Activated T-helper 2 cell treated with anti-CD3 and anti-CD28 coated beads, Interferon-gamma antibody, Interleukin-2, Interleukin-4, amounts not matched to agents 10 μg/mL and 5 μg/mL and 100 μg/mL, durations not matched to agents 14 hours and 24 hours and 36 hours (primary cell): ENCODE measurements at regions of chr14 and their contacts with region 1.

Region 1: GRCh38 chr14:60561845-60562746 is 53.1 kb downstream of the SIX6 start:
- DNase-seq: no peak
- H3K4me3 Mint-ChIP-seq: no peak overlapping the region
- H3K27ac Mint-ChIP-seq: no peak overlapping the region
- H3K4me1 Mint-ChIP-seq: no peaks in the 10 kb centered on the region
- H3K27me3 Mint-ChIP-seq: peaks cover 12% of the 10 kb centered on the region

Region 2: GRCh38 chr14:60195179-60195810 is 366.8 kb before region 1 on chr14:
- intact Hi-C with region 1: loop called (anchors 5 kb)
- DNase-seq: no peak
- H3K4me3 Mint-ChIP-seq: no peak overlapping the region
- H3K27ac Mint-ChIP-seq: no peak overlapping the region
- H3K4me1 Mint-ChIP-seq: peaks cover 16% of the 10 kb centered on the region
- H3K27me3 Mint-ChIP-seq: peaks cover 5% of the 10 kb centered on the region

Region 3: DNA sequence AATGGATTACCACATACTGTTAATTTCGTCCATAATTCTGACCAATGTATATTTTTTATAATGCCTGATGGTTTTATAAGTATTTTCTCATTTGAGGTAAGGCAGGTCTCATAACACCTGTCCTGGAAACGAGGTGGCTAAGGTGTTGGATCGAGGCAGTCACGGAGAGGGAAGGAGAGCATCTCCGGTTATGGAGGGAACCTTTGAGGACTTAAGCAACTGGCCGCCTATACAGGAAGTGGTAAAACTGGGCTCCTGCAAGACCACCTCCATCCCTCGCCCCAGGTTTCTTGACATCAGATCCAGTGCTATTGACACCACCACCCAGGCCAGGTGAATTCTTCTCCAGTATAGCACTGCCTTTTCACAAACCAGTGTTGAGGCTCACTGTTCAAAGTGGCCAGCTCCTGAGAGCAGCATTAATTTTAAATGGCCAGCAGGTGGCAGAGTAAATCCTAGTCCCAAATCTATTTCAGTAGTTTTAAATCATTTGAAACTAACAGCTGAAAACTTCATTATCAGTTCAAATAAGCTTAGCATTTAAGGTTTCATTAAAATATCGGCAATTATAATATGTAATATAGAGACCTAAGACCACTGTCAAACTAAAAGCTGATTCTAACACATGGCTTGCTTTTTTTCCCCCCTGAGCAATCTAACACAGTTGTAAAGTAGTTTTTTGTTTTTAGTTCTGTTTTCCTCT is 212.3 kb before region 1 on chr14:
- intact Hi-C with region 1: loop called (anchors 2 kb)
- DNase-seq: no peak
- H3K4me3 Mint-ChIP-seq: no peak overlapping the region
- H3K27ac Mint-ChIP-seq: no peak overlapping the region
- H3K4me1 Mint-ChIP-seq: no peaks in the 10 kb centered on the region
- H3K27me3 Mint-ChIP-seq: peaks cover 23% of the 10 kb centered on the region

Region 4: DNA sequence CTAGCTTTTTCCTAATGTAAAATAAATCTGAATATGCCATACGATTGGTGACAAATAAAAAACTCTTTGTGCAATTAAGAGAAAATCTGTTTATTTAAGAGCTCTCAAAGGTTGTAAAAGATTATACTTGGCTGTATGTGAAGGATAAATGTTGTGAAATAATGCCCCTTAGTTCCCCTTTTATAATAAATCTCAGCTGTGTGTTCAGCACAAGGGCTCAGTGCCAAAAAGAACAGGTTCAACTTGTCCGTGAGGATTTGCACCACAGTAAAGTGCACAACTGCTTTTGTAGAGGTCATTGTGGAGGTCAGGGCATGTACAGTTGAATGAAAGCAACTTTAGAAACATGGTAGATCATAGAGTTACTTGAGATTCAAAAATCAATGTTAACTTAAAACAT is 300.2 kb after region 1 on chr14:
- intact Hi-C with region 1: no loop called
- DNase-seq: no peak
- H3K4me3 Mint-ChIP-seq: no peak overlapping the region
- H3K27ac Mint-ChIP-seq: no peak overlapping the region
- H3K4me1 Mint-ChIP-seq: peaks cover 7% of the 10 kb centered on the region
- H3K27me3 Mint-ChIP-seq: peaks cover 8% of the 10 kb centered on the region